Activated B cell treated with CpG ODN at 0.5 μM for 24 hours (primary cell): ENCODE measurements at regions of chr2 and their contacts with region 1.

Region 1: GRCh38 chr2:127387655-127388422 is at the start of gene MAP3K2:
- DNase-seq: peak; percentile 95
- ATAC-seq: peak; percentile 73
- H3K4me3 Mint-ChIP-seq: peak within 1 kb of the TSS; percentile 87
- H3K27ac Mint-ChIP-seq: peak within 1 kb of the TSS; percentile 100
- H3K4me1 Mint-ChIP-seq: peaks cover 75% of the 10 kb centered on the region
- H3K27me3 Mint-ChIP-seq: no peaks in the 10 kb centered on the region
- CTCF ChIP-seq: no peak
- total RNA-seq, gene MAP3K2: 63.1 and 77.7 TPM in 2 replicates

Region 2: DNA sequence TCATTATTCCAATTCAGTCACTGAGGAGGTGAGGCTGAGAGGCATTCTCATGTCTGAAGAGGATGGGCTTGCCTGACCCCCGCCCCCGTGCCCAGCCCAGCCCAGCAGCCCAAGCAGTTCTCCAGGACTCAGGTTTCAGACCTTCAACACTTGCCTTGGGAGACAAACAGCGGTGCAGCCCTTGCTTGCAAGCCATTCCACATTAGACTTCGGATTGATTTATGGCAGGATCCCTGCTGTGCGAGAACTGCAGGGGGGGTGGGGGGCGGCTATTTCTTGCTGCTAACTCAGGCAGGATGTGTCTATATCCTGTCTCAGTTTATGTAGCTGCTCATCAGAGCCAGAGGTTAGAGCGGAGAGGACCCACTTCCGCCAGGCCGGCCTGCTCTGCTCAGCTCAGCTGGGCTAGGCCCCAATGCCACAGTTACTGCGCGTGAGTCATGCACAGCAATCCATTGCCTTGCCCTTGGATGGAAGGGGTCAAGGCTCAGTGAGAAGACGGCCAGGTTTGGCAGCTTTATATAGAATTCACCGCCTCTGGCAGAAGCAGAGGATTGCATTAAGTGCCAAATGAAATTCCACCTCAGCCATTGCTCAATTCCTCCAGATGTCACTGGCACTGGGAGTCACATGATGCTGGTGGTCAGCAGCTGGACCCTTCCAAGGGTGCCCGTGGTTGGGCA is 730.1 kb before region 1 on chr2:
- CTCF ChIA-PET with region 1: no interaction called
- POLR2A ChIA-PET with region 1: no interaction called
- intact Hi-C with region 1: loop called (anchors 2 kb)
- DNase-seq: peak; percentile 40
- ATAC-seq: peak; percentile 69
- H3K4me3 Mint-ChIP-seq: peak overlapping the region; percentile 94
- H3K27ac Mint-ChIP-seq: peak overlapping the region; percentile 94
- H3K4me1 Mint-ChIP-seq: peaks cover 68% of the 10 kb centered on the region
- H3K27me3 Mint-ChIP-seq: no peaks in the 10 kb centered on the region
- CTCF ChIP-seq: no peak

Region 3: GRCh38 chr2:127061375-127062273 is 326.2 kb before region 1 on chr2:
- CTCF ChIA-PET with region 1: no interaction called
- POLR2A ChIA-PET with region 1: no interaction called
- intact Hi-C with region 1: no loop called
- DNase-seq: no peak
- ATAC-seq: no peak
- H3K4me3 Mint-ChIP-seq: no peak overlapping the region
- H3K27ac Mint-ChIP-seq: no peak overlapping the region
- H3K4me1 Mint-ChIP-seq: peaks cover 2% of the 10 kb centered on the region
- H3K27me3 Mint-ChIP-seq: no peaks in the 10 kb centered on the region
- CTCF ChIP-seq: no peak

Region 4: GRCh38 chr2:127373362-127374083 is 14.3 kb before region 1 on chr2:
- CTCF ChIA-PET with region 1: no interaction called
- POLR2A ChIA-PET with region 1: interaction called, 5 read pairs
- intact Hi-C with region 1: loop called (anchors 2 kb)
- DNase-seq: no peak
- ATAC-seq: no peak
- H3K4me3 Mint-ChIP-seq: no peak overlapping the region
- H3K27ac Mint-ChIP-seq: no peak overlapping the region
- H3K4me1 Mint-ChIP-seq: peaks cover 25% of the 10 kb centered on the region
- H3K27me3 Mint-ChIP-seq: no peaks in the 10 kb centered on the region
- CTCF ChIP-seq: no peak

Region 5: GRCh38 chr2:127408004-127408806 is 20.4 kb after region 1 on chr2:
- CTCF ChIA-PET with region 1: interaction called, 3 read pairs
- POLR2A ChIA-PET with region 1: interaction called, 23 read pairs
- intact Hi-C with region 1: loop called (anchors 1 kb)
- DNase-seq: peak; percentile 79
- ATAC-seq: peak; percentile 91
- H3K4me3 Mint-ChIP-seq: peak overlapping the region; percentile 65
- H3K27ac Mint-ChIP-seq: no peak overlapping the region
- H3K4me1 Mint-ChIP-seq: peaks cover 51% of the 10 kb centered on the region
- H3K27me3 Mint-ChIP-seq: no peaks in the 10 kb centered on the region
- CTCF ChIP-seq: no peak

Region 6: GRCh38 chr2:127422810-127423475 is 35.1 kb after region 1 on chr2:
- CTCF ChIA-PET with region 1: interaction called, 3 read pairs
- POLR2A ChIA-PET with region 1: interaction called, 8 read pairs
- intact Hi-C with region 1: loop called (anchors 1 kb)
- DNase-seq: peak; percentile 43
- ATAC-seq: peak; percentile 88
- H3K4me3 Mint-ChIP-seq: peak overlapping the region; percentile 80
- H3K27ac Mint-ChIP-seq: no peak overlapping the region
- H3K4me1 Mint-ChIP-seq: peaks cover 16% of the 10 kb centered on the region
- H3K27me3 Mint-ChIP-seq: peaks cover 1% of the 10 kb centered on the region
- CTCF ChIP-seq: no peak

Region 7: DNA sequence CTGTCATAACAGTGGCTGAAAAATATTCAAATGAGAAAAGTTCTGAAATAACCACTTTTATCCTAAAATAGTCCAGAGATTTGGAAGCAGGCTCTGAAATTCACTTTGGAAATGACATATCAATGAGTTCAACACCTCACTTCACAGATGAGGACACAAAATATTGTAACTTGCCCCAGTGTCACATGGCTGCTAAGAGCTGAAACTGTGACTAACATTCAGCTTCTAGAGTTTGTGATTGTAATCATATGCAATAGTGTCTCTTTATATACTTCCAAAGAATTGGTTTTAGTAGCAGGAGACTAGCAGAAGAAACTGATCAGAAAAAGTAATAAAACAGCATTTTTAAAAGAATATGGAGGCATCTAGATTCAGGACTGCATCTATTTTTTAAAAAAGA is 365.5 kb after region 1 on chr2:
- CTCF ChIA-PET with region 1: no interaction called
- POLR2A ChIA-PET with region 1: no interaction called
- intact Hi-C with region 1: loop called (anchors 1 kb)
- DNase-seq: no peak
- ATAC-seq: no peak
- H3K4me3 Mint-ChIP-seq: no peak overlapping the region
- H3K27ac Mint-ChIP-seq: no peak overlapping the region
- H3K4me1 Mint-ChIP-seq: peaks cover 21% of the 10 kb centered on the region
- H3K27me3 Mint-ChIP-seq: no peaks in the 10 kb centered on the region
- CTCF ChIP-seq: no peak

Region 8: DNA sequence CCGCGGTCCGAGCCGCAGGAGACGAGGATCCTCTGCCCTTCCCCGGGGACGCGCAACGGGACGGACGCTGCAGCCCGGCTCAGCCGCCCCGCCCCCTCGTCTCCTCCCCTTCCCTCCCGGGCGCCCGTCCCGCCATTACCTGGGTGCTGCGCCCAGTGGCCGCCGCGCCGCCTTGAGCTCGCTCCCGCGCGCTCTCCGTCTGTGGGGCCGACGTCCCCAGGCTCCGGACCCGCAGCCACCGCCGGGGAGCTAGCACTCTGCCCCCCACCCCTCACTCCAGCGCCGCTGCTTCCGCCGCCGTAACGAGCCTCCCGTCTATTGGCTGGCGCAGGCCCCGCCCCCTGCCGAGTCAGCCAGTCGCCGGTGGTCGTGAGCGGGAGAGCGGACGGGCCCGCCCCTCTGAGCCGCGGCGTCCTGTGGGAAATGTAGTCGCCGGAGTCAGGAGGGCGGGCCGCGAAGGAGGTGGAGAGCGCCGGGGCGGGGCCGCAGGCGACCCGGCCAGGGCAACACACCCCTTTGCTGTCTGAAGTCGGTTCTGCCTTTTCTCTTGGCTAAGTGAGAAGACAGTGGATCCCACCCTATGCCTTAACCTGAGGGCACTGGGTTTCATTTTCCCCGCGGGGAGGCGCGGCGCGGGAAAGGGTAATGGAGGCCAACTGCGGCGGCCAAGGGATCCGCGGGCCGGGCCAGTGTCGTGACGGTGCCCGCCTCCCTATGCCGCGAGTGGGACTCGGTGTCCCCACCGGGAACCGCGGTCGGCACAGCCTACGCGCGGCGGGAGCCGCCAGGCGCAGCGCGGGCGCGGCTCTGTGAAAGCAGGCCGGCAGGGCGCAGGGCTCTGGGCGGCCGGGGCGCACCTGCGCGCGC is 640.2 kb after region 1 on chr2 and contains the start of gene SAP130:
- CTCF ChIA-PET with region 1: no interaction called
- POLR2A ChIA-PET with region 1: no interaction called
- intact Hi-C with region 1: loop called (anchors 1 kb)
- DNase-seq: peak; percentile 98
- ATAC-seq: peak; percentile 78
- H3K4me3 Mint-ChIP-seq: peak within 1 kb of the TSS; percentile 92
- H3K27ac Mint-ChIP-seq: peak within 1 kb of the TSS; percentile 84
- H3K4me1 Mint-ChIP-seq: peaks cover 18% of the 10 kb centered on the region
- H3K27me3 Mint-ChIP-seq: peaks cover 4% of the 10 kb centered on the region
- CTCF ChIP-seq: no peak
- total RNA-seq, gene SAP130: 24.7 and 27.1 TPM in 2 replicates